Ascending aorta (tissue), 2 donors: ENCODE measurements at regions of chr16 and their contacts with region 1.

Region 1: DNA sequence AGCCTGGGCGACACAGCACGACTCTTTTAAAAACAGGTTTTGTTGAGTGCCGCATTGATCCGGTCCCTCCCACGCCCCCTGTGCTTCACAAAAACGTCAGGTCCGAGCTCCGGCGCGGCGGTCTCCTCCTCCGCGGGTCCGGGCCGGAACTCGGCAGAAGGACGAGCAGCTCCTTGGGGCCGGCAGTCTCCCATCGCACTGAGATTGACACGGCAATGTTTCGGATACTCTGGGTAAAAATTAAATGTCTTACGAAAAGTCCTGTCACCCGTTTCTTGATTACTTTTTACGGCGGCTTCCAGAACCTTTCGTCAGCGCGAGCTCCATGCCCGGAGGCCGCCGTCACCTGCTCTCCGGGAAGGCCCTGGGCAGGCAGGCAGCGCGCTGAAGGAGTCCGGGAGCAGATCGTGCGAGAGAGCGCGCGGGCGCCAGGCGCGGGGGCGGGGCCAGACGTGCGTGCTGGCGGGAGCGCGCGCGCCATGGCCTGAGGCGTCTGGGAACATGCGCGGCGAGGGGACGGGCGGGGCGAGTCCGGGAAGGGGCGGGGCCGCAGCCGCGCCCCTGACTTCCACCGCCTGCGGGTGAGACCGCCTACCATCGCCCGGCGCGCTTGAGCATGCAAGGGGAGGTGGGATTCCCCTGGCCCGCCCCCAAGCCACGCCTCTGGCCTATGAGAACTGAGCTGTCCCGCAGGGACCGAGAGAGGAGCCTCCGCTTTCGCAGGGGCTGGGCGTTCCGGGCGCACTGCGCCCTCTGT is 11.7 kb upstream of the SRL start:
- DNase-seq: peak; percentile 99 to 100
- H3K4me3 ChIP-seq: peak overlapping the region; percentile 63 to 65
- H3K27ac ChIP-seq: peak overlapping the region; percentile 90 to 91
- H3K4me1 ChIP-seq: no peaks in the 10 kb centered on the region
- H3K27me3 ChIP-seq: no peaks in the 10 kb centered on the region
- CTCF ChIP-seq: no peak

Region 2: DNA sequence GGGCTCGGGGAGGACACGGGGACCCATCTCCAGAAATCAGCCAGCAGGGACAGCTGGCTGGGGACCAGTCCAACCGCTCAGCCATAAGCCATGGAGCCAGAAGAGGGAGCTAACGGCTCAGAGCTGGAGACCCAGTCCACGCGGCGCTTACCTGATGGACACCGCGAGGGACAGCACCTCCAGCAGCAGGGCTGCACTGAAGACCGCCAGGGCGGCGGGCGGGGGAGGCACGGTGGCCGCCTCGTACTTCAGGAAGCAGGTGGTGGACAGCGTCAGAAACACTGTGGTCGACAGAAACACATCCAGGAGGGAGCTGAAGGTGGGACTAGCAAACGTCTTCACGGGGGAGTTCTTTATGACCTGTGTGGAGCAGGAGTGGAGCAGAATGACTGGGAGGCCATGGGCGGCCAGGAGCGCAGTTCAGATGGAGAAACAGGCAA is 270.5 kb before region 1 on chr16:
- intact Hi-C with region 1: loop called (anchors 10 kb)
- DNase-seq: peak in 1 of 2 donors; percentile 79
- H3K4me3 ChIP-seq: no peak overlapping the region
- H3K27ac ChIP-seq: no peak overlapping the region
- H3K4me1 ChIP-seq: no peaks in the 10 kb centered on the region
- H3K27me3 ChIP-seq: no peaks in the 10 kb centered on the region
- CTCF ChIP-seq: peak; percentile 59 to 70 (median 67)

Region 3: DNA sequence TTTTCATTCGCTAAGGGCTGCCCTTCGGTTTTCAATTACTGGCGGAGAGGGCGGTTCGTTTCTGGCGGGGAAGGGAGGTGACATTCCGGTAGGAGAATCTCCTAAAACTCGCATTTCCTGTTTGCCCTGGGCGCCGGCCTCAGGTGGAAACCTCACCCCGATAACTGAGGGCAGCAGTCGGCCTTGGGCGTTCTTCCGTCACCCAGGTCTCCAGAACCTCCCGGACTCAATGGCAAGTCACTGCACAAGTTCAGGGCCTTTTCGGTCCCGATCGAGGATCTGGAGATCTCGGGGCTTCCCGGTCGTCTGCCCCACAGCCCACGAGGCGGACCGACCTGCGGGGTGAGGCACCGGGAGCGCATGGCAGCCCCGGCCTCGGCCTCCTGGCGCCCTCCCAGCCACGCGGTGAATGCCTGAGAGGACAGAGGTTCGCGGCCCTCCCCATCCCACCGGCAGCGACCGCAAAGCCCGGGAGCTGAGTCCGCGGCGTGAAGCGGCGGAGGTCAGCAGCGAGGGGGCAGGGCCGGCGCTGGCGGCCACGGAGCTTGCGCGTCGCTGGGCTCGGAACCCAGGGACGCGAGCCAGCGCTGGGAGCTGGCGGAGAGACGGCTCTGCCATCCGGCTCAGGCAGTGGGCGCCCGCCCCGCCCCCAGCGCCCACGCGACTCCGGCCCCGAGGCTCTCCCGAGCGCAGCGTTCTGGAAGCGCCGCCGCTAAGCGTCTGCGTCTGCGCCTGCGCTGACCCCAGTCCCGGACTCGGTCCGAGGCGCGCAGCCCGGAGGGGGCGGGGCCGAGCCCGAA is 70.1 kb before region 1 on chr16:
- intact Hi-C with region 1: loop called (anchors 1 kb)
- DNase-seq: peak; percentile 51 to 95
- H3K4me3 ChIP-seq: peak overlapping the region; percentile 64 to 69
- H3K27ac ChIP-seq: peak overlapping the region; percentile 92 to 93
- H3K4me1 ChIP-seq: peaks cover 0 to 4% of the 10 kb centered on the region in 2 donors
- H3K27me3 ChIP-seq: no peaks in the 10 kb centered on the region
- CTCF ChIP-seq: peak in 1 of 3 experiments; percentile 28

Region 4: GRCh38 chr16:4200000-4200780 is 53.4 kb before region 1 on chr16:
- intact Hi-C with region 1: loop called (anchors 1 kb)
- DNase-seq: peak; percentile 23 to 84
- H3K4me3 ChIP-seq: no peak overlapping the region
- H3K27ac ChIP-seq: no peak overlapping the region
- H3K4me1 ChIP-seq: peaks cover 0 to 2% of the 10 kb centered on the region in 2 donors
- H3K27me3 ChIP-seq: no peaks in the 10 kb centered on the region
- CTCF ChIP-seq: peak; percentile 80 to 86 (median 84)

Region 5: GRCh38 chr16:4214215-4214621 is 39.4 kb before region 1 on chr16:
- intact Hi-C with region 1: loop called (anchors 1 kb)
- DNase-seq: peak; percentile 36 to 85
- H3K4me3 ChIP-seq: no peak overlapping the region
- H3K27ac ChIP-seq: peak overlapping the region; percentile 93 to 94
- H3K4me1 ChIP-seq: peaks cover 12 to 42% of the 10 kb centered on the region in 2 donors
- H3K27me3 ChIP-seq: no peaks in the 10 kb centered on the region
- CTCF ChIP-seq: no peak

Region 6: DNA sequence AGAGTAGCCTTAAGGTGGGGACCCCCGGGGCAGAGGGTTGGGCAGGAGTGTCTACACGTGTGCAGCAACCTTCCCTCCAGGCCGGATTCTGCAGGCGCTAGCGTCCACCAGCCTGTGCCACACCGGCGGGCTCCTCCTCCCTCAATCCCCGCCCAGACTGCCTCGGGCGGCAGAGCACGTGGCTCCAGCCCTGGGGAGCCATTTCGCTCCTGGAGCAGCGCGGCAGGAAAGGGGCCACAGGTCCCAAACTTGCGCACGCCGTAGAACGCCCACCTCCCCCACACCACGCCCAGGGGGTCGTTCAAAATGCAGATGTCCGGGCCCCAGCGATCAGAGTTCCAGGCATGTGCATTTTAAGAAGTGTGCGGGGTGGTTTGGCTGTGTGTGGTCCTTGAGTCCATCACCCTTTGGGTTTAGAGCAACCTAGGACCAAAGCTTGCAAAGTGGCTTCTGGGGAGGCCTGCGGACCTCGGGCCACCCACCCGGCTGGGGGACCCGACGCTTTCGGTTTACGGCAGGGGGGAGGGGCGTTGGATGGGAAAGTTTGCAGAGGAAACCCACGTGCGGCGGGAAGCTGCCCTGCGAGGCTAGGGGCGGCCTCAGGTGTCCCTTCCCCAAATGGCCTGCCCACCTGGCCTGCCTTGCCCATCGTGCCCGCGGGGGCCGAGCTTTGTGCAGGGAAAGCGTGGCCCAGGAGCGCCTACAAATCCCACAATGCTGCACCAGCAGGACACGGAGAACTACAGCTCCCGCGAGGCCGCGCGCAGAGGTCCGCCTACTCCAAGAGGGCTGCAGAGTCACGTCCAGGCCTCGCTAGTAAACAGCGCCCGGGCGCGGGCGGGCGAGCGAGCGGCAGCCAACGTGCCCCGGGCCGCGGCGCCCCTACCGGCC is 17.8 kb after region 1 on chr16:
- intact Hi-C with region 1: no loop called
- DNase-seq: peak; percentile 68 to 95
- H3K4me3 ChIP-seq: peak overlapping the region; percentile 94 to 97
- H3K27ac ChIP-seq: peak overlapping the region; percentile 59 to 86
- H3K4me1 ChIP-seq: peaks cover 0 to 12% of the 10 kb centered on the region in 2 donors
- H3K27me3 ChIP-seq: no peaks in the 10 kb centered on the region
- CTCF ChIP-seq: no peak

Region 7: GRCh38 chr16:4307215-4308037 is 53.9 kb after region 1 on chr16:
- intact Hi-C with region 1: no loop called
- DNase-seq: peak; percentile 65 to 97
- H3K4me3 ChIP-seq: peak overlapping the region; percentile 53
- H3K27ac ChIP-seq: peak overlapping the region; percentile 77 to 85
- H3K4me1 ChIP-seq: peaks cover 0 to 7% of the 10 kb centered on the region in 2 donors
- H3K27me3 ChIP-seq: no peaks in the 10 kb centered on the region
- CTCF ChIP-seq: no peak

Region 8: DNA sequence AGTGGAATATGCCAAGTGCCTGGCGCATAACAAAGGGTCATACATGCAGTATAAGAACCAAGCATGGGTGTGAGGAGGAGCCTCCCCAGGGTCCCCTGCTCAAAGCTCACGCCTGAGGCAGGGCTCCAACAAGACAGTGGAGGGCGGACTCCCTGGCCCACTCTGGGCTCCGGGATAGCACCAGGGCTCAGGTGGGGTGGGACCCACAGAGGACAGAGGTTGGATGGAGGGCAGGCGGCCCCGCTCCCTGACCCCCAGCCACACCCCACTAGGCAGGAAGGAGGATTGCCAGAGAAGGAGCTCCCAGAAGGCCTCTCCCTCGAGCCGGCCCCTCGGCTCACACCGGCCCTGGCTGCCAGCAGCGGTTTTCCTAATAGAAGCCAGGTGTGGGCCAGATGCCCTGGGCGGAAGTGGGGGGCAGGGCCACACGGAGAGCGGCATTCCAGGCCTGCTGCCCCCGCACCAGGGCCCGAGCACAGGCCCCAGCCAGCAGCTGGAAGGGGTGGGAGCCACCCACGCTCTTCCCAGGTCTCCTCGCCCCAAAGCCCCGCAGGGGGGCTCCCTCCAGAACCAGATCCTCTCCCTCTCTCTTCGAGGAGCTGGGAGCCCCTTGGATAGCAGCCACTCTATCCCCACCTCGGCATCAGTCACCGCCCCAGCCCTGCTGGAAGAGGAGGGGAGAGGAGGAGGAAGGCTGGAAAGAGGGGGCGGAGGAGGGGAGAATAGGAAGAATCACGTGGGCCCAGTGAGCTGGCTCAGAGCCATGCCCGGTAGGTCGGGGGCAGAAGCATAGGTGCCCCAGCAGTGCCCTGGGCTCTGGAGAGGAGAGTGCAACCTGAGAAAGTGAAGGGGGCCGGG is 139.0 kb after region 1 on chr16:
- intact Hi-C with region 1: no loop called
- DNase-seq: peak in 1 of 2 donors; percentile 77
- H3K4me3 ChIP-seq: no peak overlapping the region
- H3K27ac ChIP-seq: peak overlapping the region; percentile 94 to 99
- H3K4me1 ChIP-seq: peaks cover 20 to 35% of the 10 kb centered on the region in 2 donors
- H3K27me3 ChIP-seq: no peaks in the 10 kb centered on the region
- CTCF ChIP-seq: no peak